Heart left ventricle (tissue), 16 donors: ENCODE measurements at regions of chrX and their contacts with region 1.

Region 1: DNA sequence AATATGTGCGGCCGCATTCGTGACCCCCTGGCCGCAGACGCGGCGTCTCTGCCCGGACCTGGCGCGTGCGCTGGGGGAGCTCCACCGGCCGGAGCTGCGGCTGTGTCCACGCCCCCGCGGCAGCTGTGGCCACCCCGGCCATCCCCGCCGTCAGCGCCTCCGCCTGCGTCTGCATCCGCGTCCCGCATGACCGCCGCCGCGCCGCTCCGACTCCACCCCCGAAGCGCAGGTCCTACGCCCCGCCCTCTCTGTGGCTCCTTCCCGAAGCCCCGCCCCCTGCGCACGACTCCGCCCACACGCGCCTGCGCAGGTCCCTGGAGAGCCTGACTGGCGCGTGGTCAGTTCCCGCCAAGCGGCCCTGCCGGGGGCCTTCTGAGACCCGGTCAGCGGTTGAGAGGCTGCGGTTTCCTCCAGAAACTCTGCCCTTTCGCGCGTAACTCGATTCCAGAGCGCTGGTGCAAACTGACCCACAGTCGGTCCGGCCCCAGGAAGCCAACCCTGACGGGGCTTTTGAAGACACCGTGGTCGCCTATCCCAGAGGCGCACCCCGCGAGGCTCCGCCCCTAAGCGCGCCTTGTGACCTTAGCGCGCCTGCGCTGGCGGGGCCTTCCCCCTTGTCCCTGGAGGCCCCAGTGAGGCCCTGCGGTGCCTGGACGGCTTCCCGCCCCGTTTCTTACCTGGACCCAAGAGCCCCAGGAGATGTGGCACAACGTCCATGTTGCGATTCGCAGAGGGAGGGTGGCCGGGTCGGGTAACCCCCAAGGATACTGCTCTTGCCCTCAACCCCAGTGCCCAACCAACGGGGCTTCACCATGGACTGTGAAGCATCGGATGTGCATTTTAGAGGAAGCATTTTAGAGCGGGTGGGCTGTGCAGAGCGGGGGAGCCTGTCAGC is at the start of gene LAGE3:
- DNase-seq: peak; percentile 93 to 95 (median 94)
- ATAC-seq: peak; percentile 91 to 97 (median 94)
- H3K4me3 ChIP-seq: peak within 1 kb of the TSS; percentile 23 to 67 (median 58)
- H3K27ac ChIP-seq: peak within 1 kb of the TSS in 11 of 12 donors; percentile 69 to 88 (median 84)
- H3K4me1 ChIP-seq: peaks cover 0 to 17% (median 1%) of the 10 kb centered on the region in 12 donors
- H3K27me3 ChIP-seq: no peaks in the 10 kb centered on the region
- CTCF ChIP-seq: no peak
- POLR2A ChIP-seq: peak in 1 of 2 donors; percentile 65
- total RNA-seq, gene LAGE3: 16.2 to 23.6 (median 18.9) TPM

Region 2: DNA sequence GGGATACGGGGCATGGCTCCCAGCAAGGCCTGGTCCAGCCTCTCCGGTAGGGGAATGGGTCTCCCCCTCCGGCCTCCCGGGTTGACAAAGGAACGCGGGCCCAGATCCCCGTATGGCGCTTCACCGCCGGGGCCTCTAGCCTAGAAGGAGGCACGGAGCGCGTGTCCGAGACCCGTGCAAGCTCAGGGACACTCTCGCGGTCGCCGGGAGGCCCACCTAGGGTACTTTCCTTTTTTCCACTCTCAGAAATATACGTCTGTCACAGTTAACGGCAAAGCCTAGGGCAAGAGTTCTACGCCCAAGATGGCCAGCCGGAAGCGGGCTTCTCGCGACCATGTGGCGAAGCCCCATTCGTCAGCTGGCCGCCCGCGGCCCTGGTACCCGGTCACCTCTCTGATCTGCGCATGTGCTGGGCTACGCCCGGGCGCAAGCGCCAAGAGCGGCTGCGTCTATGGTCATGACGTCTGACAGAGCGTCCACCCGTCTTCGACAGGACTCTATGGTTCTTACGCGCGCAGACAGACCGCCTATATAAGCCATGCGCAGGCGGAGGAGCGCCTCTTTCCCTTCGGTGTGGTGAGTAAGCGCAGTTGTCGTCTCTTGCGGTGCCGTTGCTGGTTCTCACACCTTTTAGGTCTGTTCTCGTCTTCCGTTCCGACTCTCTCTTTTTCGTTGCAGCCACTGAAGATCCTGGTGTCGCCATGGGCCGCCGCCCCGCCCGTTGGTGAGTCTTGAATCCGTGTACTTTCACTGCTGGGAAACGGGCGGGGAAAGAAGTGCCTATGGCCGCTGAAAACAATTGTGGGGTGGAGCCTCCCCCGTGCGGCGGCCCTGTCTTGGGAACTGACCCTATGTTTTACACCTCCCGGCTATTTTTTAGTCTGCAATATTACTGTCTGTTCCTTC is 80.9 kb before region 1 on chrX and contains the start of gene RPL10:
- intact Hi-C with region 1: loop called in 1 of 10 experiments (anchors 5 kb)
- DNase-seq: peak; percentile 92 to 97 (median 96)
- ATAC-seq: peak; percentile 87 to 97 (median 92)
- H3K4me3 ChIP-seq: peak within 1 kb of the TSS; percentile 67 to 99 (median 86)
- H3K27ac ChIP-seq: peak within 1 kb of the TSS; percentile 98 to 100 (median 98)
- H3K4me1 ChIP-seq: peaks cover 0 to 16% (median 10%) of the 10 kb centered on the region in 12 donors
- H3K27me3 ChIP-seq: no peaks in the 10 kb centered on the region
- CTCF ChIP-seq: no peak
- POLR2A ChIP-seq: peak in 1 of 2 donors; percentile 91
- total RNA-seq, gene RPL10: 1,381 to 3,072 (median 2,052) TPM

Region 3: DNA sequence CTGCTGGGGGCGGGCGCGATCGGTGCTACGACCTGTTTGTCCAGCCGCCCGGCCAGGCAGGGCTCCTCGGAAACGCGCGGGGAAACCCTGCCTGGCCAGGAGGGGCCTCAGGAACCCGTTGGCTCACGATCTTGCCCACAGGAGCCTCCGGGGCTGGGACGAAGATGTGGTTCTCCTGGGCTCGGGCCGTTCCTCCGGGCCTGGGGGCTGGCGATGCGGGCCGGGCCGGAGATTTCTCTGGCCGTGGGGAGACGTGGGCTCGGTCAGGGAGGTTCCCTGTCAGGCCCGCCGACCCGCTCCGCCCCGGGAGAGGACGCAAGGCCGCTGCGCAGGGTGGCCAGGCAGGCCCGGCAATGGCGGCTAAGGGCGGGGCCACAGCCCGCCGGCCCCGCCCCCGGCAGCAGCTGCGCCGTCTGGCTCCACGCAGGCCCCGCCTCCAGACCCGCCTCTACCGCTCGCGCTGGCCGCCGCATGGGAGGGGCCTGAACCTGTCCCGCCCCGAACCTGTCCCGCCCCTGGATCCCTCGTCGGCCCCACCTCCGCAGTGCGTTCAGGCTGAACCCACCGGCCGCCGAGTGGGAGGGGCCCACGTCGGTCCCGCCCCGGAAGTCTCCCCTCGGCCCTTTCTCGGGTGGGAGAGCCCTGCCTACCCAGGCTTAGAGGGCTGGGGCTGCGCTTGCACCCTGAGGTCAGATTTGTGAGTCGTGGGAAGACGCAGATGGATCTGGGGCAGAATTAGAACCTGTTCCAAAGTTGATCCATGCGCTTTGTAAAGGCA is 37.1 kb after region 1 on chrX and contains the start of gene FAM3A:
- intact Hi-C with region 1: loop called in 1 of 10 experiments (anchors 5 kb)
- DNase-seq: peak; percentile 94 to 97 (median 95)
- ATAC-seq: peak; percentile 94 to 97 (median 97)
- H3K4me3 ChIP-seq: peak within 1 kb of the TSS; percentile 59 to 97 (median 76)
- H3K27ac ChIP-seq: peak within 1 kb of the TSS; percentile 89 to 98 (median 93)
- H3K4me1 ChIP-seq: peaks cover 0 to 28% (median 10%) of the 10 kb centered on the region in 12 donors
- H3K27me3 ChIP-seq: peaks cover 0 to 5% (median 0%) of the 10 kb centered on the region in 9 donors
- CTCF ChIP-seq: no peak
- POLR2A ChIP-seq: peak; percentile 82 to 94
- total RNA-seq, gene FAM3A: 36.2 to 82.6 (median 48.6) TPM